H1 (cell line): ENCODE measurements at regions of chr5 and their contacts with region 1.

Region 1: DNA sequence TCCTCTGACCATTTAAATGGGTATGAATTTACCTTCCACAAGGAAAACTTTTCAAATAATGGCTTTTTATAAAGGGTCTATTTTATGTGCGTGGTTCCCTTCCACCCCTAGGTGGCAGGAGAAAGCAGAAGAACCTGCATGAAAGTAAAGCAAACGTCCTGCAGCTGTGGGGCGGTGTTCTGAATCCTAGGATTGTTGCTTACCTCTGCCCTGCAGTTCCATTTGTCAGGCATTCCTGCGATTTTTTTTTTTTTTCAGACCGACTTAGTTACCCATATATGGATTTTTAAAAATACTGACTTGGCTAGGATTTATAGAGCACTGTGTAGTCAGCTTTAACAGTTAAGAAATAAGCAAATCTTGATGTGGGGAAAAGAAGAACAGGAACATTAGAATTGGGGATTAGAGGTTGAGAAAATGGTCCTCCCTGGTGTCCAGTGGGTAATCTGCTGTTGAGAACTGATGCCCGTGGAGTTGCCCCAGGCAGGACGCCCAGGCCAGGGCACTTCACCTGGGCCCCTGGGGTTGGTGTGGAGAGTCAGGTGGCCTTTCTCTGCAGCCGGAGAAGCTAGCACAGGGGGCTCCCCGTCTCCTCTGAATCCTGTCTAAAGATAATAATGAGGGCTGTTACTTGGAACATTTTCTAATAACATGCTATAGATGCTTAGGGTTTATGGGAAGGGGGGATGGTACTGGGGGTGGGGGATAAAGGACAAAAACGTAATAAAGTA is 30.4 kb upstream of the LTC4S start:
- DNase-seq: no peak
- H3K4me3 ChIP-seq: no peak overlapping the region
- H3K27ac ChIP-seq: no peak overlapping the region
- H3K4me1 ChIP-seq: peaks cover 3 to 19% (median 5%) of the 10 kb centered on the region in 4 experiments
- H3K27me3 ChIP-seq: no peaks in the 10 kb centered on the region
- CTCF ChIP-seq: peak; percentile 47 to 94 (median 89)
- EP300 ChIP-seq: no peak
- POLR2A ChIP-seq: no peak
- RAD21 ChIP-seq: peak; percentile 66 to 71

Region 2: GRCh38 chr5:179749857-179750508 is 13.4 kb before region 1 on chr5:
- CTCF ChIA-PET with region 1: interaction called, 23 read pairs
- POLR2A ChIA-PET with region 1: interaction called, 4 read pairs
- DNase-seq: no peak
- H3K4me3 ChIP-seq: no peak overlapping the region
- H3K27ac ChIP-seq: no peak overlapping the region
- H3K4me1 ChIP-seq: peaks cover 2 to 6% (median 4%) of the 10 kb centered on the region in 4 experiments
- H3K27me3 ChIP-seq: no peaks in the 10 kb centered on the region
- CTCF ChIP-seq: peak in 2 of 3 experiments; percentile 27 to 56; a peak in 2 of 4 replicates
- EP300 ChIP-seq: no peak
- POLR2A ChIP-seq: no peak
- RAD21 ChIP-seq: peak; percentile 11 to 23; a peak in 1 of 4 replicates

Region 3: DNA sequence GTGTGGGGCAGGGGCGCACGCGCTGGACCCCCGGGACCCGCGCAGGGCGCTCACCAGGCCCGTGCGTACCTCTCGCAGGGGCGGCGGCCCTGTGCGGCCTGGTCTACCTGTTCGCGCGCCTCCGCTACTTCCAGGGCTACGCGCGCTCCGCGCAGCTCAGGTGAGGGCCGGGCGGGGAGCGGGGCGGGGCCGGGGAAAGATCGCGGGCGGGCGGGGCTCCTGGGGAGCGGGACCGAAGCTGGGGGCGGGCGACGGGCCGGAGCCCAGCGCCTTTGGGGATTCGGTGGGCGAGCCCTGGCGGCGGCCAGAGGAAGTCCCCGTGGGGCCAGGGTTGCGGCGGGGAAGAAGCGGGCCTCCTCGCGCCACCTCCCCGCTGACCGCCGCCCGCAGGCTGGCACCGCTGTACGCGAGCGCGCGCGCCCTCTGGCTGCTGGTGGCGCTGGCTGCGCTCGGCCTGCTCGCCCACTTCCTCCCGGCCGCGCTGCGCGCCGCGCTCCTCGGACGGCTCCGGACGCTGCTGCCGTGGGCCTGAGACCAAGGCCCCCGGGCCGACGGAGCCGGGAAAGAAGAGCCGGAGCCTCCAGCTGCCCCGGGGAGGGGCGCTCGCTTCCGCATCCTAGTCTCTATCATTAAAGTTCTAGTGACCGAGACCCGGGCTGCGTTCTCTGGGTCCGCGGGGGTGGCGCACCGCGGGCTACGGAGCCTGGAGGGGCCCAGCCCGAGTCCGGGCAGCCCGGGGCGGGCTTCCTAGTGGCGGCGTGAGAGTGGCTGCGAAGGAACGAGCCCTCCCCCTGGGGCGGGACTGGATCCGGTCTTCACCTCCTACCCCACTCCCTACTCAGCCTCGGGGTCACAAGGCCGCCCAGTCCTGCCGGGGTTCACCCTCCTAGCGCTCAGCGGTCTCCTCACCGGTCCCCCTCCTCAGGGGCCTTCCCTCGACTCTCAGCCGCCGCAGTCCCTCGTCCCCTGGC is 32.8 kb after region 1 on chr5:
- CTCF ChIA-PET with region 1: interaction called, 23 read pairs
- POLR2A ChIA-PET with region 1: interaction called, 7 read pairs
- DNase-seq: peak in 1 of 2 experiments; percentile 85
- H3K4me3 ChIP-seq: peak overlapping the region; percentile 61 to 88 (median 64)
- H3K27ac ChIP-seq: no peak overlapping the region
- H3K4me1 ChIP-seq: peaks cover 0 to 14% (median 9%) of the 10 kb centered on the region in 4 experiments; a peak in 5 of 7 replicates
- H3K27me3 ChIP-seq: peaks cover 0 to 2% (median 0%) of the 10 kb centered on the region in 4 experiments; a peak in 1 of 7 replicates
- CTCF ChIP-seq: peak in 2 of 3 experiments; percentile 64 to 72; a peak in 3 of 4 replicates
- EP300 ChIP-seq: peak in 1 of 2 experiments; percentile 16; a peak in 1 of 3 replicates
- POLR2A ChIP-seq: peak in 1 of 2 experiments; percentile 44; a peak in 2 of 3 replicates
- RAD21 ChIP-seq: peak; percentile 35 to 64